ENCODE measurements at regions of chr20 and their contacts with region 1.

Region 1: GRCh38 chr20:45322952-45323383 is 14.9 kb upstream of the MATN4 start:
- DNase-seq: peak; percentile 48 to 55
- H3K4me3 ChIP-seq: no peak overlapping the region
- H3K27ac ChIP-seq: no peak overlapping the region
- H3K4me1 ChIP-seq: peaks cover 22% of the 10 kb centered on the region
- H3K27me3 ChIP-seq: no peaks in the 10 kb centered on the region
- CTCF ChIP-seq: peak; percentile 49; the same call in 1 of the 2 replicates

Region 2: DNA sequence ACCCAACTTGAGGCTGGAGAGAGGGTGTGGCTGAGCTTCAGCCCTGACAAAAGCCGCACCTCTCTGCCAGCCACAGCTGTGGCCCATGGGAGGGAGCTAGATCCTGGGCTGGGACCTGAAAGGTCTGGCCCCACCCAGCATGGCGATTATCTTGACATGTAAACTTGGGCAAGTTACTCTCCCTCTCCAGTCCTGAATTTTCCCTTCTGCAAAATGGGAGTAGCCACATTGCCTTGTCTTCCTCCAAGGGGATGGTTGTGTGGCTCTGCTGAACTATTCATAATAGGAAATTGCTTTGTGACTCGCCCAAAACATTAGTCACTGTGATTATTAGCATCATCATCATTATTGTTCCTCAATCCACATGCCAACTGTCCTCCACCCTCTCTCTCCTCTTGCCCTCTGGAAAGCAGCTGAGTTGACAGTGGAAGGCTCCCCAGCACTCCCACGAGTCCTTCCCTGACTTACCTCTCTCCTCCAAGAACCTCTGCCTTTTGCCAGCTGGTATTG is 39.4 kb before region 1 on chr20:
- CTCF ChIA-PET with region 1: no interaction called
- POLR2A ChIA-PET with region 1: no interaction called
- intact Hi-C with region 1: no loop called
- DNase-seq: peak in 1 of 2 experiments; percentile 73
- H3K4me3 ChIP-seq: no peak overlapping the region
- H3K27ac ChIP-seq: no peak overlapping the region
- H3K4me1 ChIP-seq: peaks cover 29% of the 10 kb centered on the region
- H3K27me3 ChIP-seq: no peaks in the 10 kb centered on the region
- CTCF ChIP-seq: no peak

Region 3: DNA sequence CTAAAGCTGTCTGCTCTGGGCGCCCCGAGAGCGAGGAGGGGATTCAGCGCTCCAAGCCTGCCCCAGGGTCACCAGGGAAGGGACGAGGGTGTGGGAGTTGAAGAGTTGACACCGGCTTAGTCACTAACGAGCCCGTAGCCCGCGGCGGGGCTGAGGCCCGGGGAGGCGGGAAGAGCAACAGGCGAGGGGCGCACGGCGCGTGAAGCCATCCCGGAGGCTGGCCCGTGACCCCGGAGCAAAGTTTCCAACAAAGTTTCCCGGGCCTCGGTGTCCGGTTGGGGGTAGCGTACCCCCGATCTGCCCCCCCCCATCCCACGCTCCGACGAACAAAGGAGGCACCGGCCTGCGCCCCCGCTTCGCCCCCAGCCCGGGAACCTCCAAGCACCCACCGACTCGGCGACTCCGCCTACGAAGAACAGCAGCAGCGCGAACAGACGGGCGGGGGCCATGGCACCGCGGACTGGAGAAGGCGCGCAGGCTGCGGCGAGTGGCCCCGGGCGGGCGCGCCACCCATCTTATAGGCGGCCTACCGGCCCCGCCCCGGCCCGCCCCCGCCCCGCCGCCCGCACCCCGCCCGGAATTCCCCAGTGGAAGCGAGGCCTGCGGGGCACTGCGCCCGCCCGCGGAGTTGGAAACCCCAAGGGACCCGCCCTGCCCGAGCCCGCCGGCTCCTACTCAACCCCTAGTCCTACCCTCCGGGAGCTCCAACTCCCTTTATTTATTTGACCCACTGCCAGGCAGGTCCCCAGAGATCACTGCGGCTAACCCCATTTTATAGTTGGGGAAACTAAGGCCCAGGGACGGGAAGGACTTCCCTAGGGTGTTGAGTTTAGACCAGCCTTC is 25.2 kb after region 1 on chr20 and contains the start of gene SDC4:
- CTCF ChIA-PET with region 1: interaction called, 3 read pairs
- POLR2A ChIA-PET with region 1: interaction called, 5 read pairs
- intact Hi-C with region 1: loop called (anchors 1 kb)
- DNase-seq: peak; percentile 63 to 80
- H3K4me3 ChIP-seq: peak within 1 kb of the TSS; percentile 76
- H3K27ac ChIP-seq: peak within 1 kb of the TSS; percentile 92
- H3K4me1 ChIP-seq: peaks cover 44% of the 10 kb centered on the region
- H3K27me3 ChIP-seq: no peaks in the 10 kb centered on the region
- CTCF ChIP-seq: 0 out of 2 replicates have a peak, but pooled peaks have one; percentile 21
- total RNA-seq, gene SDC4: 114 and 117 TPM in 2 replicates

Region 4: DNA sequence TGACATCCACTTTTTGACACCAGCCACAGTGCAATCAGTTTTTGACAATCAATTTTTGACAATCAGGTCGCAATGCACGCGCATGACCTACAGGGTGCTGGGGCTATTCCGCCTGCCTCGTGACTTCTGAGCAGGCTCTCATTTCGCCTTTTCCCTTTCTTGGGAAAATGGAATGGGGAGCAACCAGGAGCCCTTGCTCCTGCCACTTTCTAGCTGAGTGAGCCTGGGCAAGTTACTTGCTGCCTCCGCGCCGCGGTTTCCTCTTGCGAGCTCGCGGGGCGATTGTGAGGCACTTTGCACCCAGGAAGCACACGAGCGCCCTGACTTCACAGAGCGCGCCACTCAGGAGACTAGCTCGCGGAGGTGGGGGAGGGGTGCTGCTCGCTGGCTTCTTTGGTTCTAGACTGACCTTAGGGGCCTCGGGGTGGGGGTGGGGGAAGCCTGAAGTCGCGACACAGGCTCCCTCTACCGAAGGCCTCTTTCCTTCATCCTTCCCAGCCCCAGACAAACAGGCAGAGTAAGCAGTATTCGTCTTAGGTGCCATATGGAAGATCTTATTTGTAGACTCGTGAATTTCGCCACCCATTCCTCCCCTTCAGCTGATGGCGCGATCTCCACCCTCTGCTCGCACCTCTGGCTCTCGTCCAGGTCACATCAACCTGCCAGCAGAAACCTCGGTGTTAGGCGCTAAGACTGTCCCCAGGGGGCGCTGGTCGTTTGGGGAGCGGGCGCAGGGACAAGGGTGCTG is 50.6 kb after region 1 on chr20:
- CTCF ChIA-PET with region 1: interaction called, 7 read pairs
- POLR2A ChIA-PET with region 1: interaction called, 12 read pairs
- intact Hi-C with region 1: no loop called
- DNase-seq: peak; percentile 57 to 87
- H3K4me3 ChIP-seq: no peak overlapping the region
- H3K27ac ChIP-seq: no peak overlapping the region
- H3K4me1 ChIP-seq: no peaks in the 10 kb centered on the region
- H3K27me3 ChIP-seq: no peaks in the 10 kb centered on the region
- CTCF ChIP-seq: peak; percentile 76

Region 5: DNA sequence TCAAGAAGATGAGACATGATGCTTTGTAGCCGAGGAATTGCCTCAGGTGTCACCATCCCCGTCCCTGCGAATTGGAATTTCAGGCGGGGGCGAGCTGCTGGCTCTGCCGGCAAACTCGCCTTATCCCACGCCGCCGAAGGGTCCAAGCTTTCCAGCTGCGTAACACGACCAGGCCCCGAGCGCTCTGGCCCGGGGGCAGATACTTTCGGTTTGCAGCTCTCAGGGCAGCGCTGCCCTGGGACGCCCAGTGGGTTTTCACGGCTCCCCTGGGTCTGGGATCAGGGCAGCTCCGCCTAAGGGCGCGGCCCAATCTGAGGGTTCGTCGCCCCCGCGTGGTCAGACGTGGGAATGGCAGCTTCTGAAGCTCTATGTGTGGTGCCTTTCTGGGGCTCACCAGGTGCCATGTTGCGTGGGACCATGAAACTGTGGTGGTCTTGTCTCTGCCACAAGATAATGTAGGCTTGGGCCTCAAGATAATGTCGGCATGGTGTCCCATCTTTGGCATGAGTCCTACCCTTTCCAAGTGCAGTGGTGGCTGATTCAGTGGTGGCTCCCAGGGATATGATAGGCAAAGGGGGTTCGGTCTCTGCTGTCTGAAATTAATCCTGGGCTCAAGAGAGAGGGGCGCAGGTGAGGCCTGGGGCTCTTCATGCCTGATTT is 113.9 kb after region 1 on chr20:
- CTCF ChIA-PET with region 1: interaction called, 35 read pairs
- POLR2A ChIA-PET with region 1: interaction called, 4 read pairs
- intact Hi-C with region 1: loop called (anchors 1 kb)
- DNase-seq: peak; percentile 70 to 89
- H3K4me3 ChIP-seq: peak overlapping the region; percentile 78
- H3K27ac ChIP-seq: no peak overlapping the region
- H3K4me1 ChIP-seq: peaks cover 14% of the 10 kb centered on the region
- H3K27me3 ChIP-seq: no peaks in the 10 kb centered on the region
- CTCF ChIP-seq: peak; percentile 98

Region 6: DNA sequence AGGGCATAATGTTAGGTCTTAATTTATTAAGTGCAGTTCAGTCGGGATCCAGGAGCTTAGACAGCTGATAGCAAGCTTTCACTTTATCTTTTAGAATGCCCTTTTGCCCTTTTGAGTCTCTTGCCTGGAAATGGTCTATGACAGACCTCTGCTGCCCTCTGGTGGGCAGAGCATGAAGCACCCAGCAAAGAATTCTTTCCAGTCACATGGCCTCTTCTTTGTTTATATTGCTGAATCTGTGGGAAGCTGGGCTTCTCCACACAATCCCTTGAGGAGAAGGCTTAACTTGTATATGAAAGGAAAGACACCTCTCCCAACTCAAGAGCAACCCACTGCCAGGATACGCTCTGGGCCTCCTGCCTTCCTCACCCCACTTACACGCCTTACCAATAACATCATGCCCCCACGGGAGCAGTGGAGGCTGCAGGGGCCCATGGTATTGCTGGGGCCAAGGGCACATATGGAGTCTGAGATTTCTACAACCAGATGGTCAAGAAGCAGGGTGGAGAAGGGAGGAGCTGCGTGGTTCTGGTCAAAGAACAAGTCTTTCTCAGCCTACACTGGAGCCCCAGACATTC is 448.3 kb after region 1 on chr20:
- CTCF ChIA-PET with region 1: interaction called, 19 read pairs
- POLR2A ChIA-PET with region 1: no interaction called
- intact Hi-C with region 1: loop called (anchors 1 kb)
- DNase-seq: peak; percentile 74 to 84
- H3K4me3 ChIP-seq: no peak overlapping the region
- H3K27ac ChIP-seq: no peak overlapping the region
- H3K4me1 ChIP-seq: peaks cover 6% of the 10 kb centered on the region
- H3K27me3 ChIP-seq: no peaks in the 10 kb centered on the region
- CTCF ChIP-seq: peak; percentile 98